ENCODE measurements at regions of chr11 and their contacts with region 1.

Region 1: GRCh38 chr11:120324932-120325810 is at the start of gene TLCD5:
- H3K4me3 ChIP-seq: peak within 1 kb of the TSS; percentile 72
- H3K27ac ChIP-seq: peak within 1 kb of the TSS; percentile 67
- H3K4me1 ChIP-seq: no peaks in the 10 kb centered on the region
- CTCF ChIP-seq: 0 out of 2 replicates have a peak, but pooled peaks have one; percentile 36

Region 2: GRCh38 chr11:120335908-120336640 is 10.9 kb after region 1 on chr11 and contains the start of gene ARHGEF12:
- CTCF ChIA-PET with region 1: interaction called, 13 read pairs
- POLR2A ChIA-PET with region 1: interaction called, 9 read pairs
- H3K4me3 ChIP-seq: peak within 1 kb of the TSS; percentile 84
- H3K27ac ChIP-seq: peak within 1 kb of the TSS; percentile 94
- H3K4me1 ChIP-seq: no peaks in the 10 kb centered on the region
- CTCF ChIP-seq: peak; percentile 88

Measured in HEK293 (cell line).